Activated CD4-positive, alpha-beta T cell treated with anti-CD3 and anti-CD28 coated beads for 36 hours (primary cell): ENCODE measurements at regions of chr15 and their contacts with region 1.

Region 1: GRCh38 chr15:34101366-34102175 is at the starts of genes EMC7 and PGBD4:
- DNase-seq: peak; percentile 99
- ATAC-seq: peak; percentile 99
- H3K4me3 Mint-ChIP-seq: peak within 1 kb of the TSS; percentile 100
- H3K27ac Mint-ChIP-seq: peak within 1 kb of the TSS; percentile 99
- H3K4me1 Mint-ChIP-seq: peaks cover 40% of the 10 kb centered on the region
- H3K27me3 Mint-ChIP-seq: no peaks in the 10 kb centered on the region
- total RNA-seq, gene EMC7: 46.7 to 48.5 TPM
- total RNA-seq, gene PGBD4: 2.3 to 2.4 TPM

Region 2: GRCh38 chr15:34337557-34338306 is 236.2 kb after region 1 on chr15 and contains the start of gene SLC12A6:
- CTCF ChIA-PET with region 1: no interaction called
- POLR2A ChIA-PET with region 1: interaction called, 4 read pairs
- intact Hi-C with region 1: loop called (anchors 1 to 2 kb)
- DNase-seq: peak; percentile 95
- ATAC-seq: peak; percentile 82
- H3K4me3 Mint-ChIP-seq: peak within 1 kb of the TSS; percentile 83
- H3K27ac Mint-ChIP-seq: peak within 1 kb of the TSS; percentile 97
- H3K4me1 Mint-ChIP-seq: peaks cover 67% of the 10 kb centered on the region
- H3K27me3 Mint-ChIP-seq: no peaks in the 10 kb centered on the region
- total RNA-seq, gene SLC12A6: 18.2 to 22.1 TPM

Region 3: DNA sequence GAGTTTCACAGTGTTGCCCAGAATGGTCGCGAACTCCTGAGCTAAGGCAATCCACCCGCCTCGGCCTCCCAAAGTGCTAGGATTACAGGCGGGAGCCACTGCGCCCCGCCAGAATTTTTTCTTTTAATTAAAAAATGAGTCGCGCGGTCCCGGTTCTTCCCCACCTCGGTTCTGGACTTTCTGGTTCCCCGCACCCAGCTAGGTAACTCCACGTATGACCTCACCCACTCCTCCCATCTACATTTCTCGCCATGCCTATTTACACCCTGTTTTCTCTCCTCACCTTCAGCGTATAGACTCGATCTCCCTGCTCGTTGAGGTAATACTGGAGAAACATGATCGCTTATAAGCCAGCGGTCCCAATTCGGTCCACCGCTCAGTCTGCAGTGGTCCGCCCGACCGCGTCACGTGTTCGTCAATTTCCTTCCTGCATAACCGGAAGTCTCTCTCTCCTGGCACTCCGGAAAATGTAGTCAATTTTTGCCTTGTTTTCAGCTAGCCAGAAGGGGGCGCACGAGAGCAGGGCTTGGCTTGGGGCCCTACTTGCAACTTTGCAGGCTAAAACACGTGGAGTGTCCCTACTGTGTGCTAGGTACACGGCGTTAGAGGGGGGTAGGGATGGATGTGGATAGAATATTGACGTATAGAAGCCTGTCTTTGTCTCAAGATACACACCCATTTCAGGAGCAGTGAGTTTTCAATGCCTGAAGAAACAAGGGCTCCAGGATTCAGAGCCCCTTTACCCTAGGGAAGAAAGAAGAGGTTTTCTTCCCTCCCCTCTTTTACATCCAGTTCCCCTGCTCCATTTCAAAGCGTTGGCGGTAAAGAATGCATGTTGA is 241.4 kb after region 1 on chr15 and contains the starts of genes NOP10 and NUTM1:
- CTCF ChIA-PET with region 1: no interaction called
- POLR2A ChIA-PET with region 1: interaction called, 4 read pairs
- intact Hi-C with region 1: loop called (anchors 1 to 2 kb)
- DNase-seq: peak; percentile 97
- ATAC-seq: peak; percentile 91
- H3K4me3 Mint-ChIP-seq: no peak within 1 kb of the TSS
- H3K27ac Mint-ChIP-seq: peak within 1 kb of the TSS; percentile 88
- H3K4me1 Mint-ChIP-seq: peaks cover 30% of the 10 kb centered on the region
- H3K27me3 Mint-ChIP-seq: no peaks in the 10 kb centered on the region
- total RNA-seq, gene NOP10: 217 to 313 TPM
- total RNA-seq, gene NUTM1: not detected

Region 4: DNA sequence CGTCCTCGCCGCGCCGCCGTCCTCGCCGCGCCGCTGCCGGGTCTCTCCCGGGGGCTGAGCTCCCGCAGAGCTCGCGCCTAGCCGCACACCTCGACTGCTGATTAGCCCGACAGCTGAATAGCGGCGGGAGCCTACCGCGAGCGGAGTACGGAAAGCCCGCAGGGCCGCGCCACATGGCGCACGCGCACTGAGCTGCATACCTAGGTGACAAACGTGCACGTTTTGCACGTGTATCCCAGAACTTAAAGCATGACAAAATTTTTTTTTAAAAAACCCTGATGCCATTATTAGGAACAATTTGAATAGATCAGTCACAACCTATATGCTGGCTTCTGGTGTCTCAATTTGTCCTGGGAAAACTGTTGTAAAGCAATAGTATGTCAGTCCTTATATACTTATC is 336.1 kb after region 1 on chr15 and contains the start of gene GOLGA8A:
- CTCF ChIA-PET with region 1: no interaction called
- POLR2A ChIA-PET with region 1: no interaction called
- intact Hi-C with region 1: loop called in 1 of 2 experiments (anchors 2 kb)
- DNase-seq: peak; percentile 94
- ATAC-seq: peak; percentile 85
- H3K4me3 Mint-ChIP-seq: peak within 1 kb of the TSS; percentile 86
- H3K27ac Mint-ChIP-seq: peak within 1 kb of the TSS; percentile 95
- H3K4me1 Mint-ChIP-seq: peaks cover 18% of the 10 kb centered on the region
- H3K27me3 Mint-ChIP-seq: peaks cover under 1% of the 10 kb centered on the region
- total RNA-seq, gene GOLGA8A: 147 to 165 TPM

Region 5: DNA sequence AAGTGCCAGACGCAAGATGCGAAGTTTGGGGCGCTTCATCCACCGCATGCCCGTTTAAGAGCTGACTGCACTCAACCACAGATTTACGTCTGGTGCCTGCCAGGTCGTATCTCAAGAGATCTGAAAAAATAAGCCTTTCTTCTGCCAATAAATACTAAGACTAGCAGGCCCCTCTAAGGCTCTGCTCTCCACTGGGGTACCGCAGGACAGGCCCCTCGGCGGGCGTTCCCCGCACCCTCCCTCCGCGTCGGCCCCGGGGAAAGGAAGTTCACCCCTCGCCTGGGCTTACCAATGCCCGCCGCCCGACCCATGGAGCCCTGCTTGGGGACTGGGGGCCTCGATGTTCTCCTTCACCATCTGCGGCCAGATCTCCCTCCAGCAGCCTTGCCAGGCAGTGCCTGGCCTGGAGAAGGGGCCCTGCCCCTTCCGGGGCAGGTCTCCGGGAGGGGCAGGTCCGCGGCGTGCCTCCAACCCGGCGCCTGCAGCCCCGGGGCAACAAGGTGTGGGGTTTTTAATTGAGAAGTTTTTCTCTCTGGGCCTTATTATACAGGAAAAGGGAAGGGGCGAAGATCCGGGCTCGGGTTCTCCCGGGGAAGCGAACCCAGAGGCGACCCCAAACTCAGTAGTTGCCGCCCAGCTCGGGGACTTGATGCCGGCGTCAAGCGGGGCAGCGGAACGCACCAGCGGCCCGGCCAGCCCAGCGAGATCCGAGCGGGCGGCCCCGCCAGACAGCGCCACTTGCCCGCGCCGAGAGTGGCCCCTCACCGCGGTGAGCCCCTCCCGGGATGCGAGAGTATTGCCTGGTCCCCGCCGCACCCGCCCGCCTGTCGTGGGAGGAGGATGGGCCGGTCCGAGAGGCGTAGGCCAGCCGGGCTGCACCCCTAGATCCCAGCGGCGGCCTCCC is 481.1 kb after region 1 on chr15:
- CTCF ChIA-PET with region 1: no interaction called
- POLR2A ChIA-PET with region 1: interaction called, 3 read pairs
- intact Hi-C with region 1: loop called in 1 of 2 experiments (anchors 1 kb)
- DNase-seq: peak; percentile 68
- ATAC-seq: peak; percentile 56
- H3K4me3 Mint-ChIP-seq: peak overlapping the region; percentile 89
- H3K27ac Mint-ChIP-seq: peak overlapping the region; percentile 69
- H3K4me1 Mint-ChIP-seq: peaks cover 41% of the 10 kb centered on the region
- H3K27me3 Mint-ChIP-seq: peaks cover 13% of the 10 kb centered on the region

Region 6: DNA sequence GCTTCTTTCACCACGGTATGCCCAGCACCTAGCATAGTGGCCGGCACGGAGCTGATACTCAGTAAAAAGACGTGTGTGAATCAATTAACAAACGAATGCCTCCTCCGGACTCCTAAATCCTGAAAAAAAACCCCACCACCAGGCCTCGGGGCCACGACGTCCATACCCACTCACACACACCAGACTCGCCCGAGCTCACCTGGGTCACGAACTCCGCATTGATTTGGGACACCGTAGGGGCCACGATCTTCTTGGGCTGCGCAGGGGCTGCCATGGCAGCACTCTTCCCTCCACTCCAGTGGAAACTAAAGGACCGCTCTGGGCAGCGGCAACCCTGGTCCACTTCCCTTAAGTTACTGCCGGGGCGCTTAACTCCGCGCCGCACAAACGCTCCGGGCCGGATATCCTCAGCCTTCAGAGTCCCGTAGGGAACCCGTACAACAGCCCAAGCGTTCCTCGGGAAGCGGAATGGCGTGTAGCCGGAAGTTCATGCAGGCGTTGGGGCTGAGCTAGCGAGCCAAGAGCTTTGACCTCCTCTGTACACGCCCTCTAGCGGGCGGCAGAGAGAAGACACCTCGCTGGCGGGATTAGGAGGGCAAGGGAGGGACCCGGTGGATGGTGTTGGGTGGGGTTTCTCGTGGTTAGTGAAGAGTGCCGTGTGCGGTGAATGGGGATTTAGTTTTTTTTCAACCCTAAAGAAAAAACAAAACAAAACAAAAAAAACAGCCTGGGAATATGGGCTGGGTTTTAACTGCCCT is 867.9 kb after region 1 on chr15 and contains the start of gene AQR:
- CTCF ChIA-PET with region 1: no interaction called
- POLR2A ChIA-PET with region 1: no interaction called
- intact Hi-C with region 1: loop called in 1 of 2 experiments (anchors 1 kb)
- DNase-seq: peak; percentile 95
- ATAC-seq: peak; percentile 99
- H3K4me3 Mint-ChIP-seq: peak within 1 kb of the TSS; percentile 98
- H3K27ac Mint-ChIP-seq: peak within 1 kb of the TSS; percentile 91
- H3K4me1 Mint-ChIP-seq: peaks cover 35% of the 10 kb centered on the region
- H3K27me3 Mint-ChIP-seq: no peaks in the 10 kb centered on the region
- total RNA-seq, gene AQR: 39.2 to 62.0 TPM

Region 7: DNA sequence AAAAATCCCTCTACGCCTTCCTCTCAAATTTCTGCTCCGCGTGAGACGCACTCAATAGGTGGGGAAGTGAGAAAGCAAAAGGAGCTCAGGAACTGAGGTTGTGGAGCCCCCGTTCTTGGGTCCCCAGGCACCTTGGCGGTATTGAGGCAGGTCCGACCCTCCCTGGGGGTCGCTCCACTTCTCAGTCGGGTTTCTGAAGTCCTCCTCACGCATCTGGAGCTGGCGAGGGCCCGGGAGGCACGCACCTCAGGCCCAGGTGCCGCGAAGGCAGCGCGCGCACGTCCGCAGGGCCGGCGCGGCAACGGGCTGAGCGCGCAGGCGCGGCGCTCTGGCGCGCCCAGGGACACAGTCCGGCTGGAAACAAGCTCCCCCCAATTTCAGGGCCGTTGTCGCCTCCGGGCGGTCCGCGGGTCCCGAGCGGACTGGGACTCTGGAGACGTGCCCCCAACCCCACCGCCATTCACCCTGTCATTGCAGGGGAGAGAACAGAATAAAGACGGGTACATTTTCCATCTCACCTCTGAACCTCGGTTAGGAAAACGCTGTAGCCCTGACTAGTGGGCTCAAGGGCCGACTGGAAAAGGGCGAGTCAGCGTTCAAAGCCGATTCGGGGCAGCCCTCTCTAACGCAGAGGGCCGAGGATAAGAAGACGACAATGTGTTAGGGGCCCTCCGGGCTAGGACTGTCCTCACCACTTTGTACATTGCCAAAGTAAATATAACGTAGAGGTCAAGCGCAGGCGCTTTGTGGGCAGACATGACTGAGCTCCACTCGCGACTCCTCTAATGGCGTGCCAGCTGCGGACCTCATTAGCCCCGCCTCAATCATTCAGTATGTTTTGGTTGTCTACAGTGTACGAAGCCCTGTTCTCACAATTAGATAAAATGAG is 886.7 kb after region 1 on chr15 and contains the start of gene ZNF770:
- CTCF ChIA-PET with region 1: no interaction called
- POLR2A ChIA-PET with region 1: no interaction called
- intact Hi-C with region 1: loop called in 1 of 2 experiments (anchors 5 kb)
- DNase-seq: peak; percentile 88
- ATAC-seq: peak; percentile 87
- H3K4me3 Mint-ChIP-seq: peak within 1 kb of the TSS; percentile 97
- H3K27ac Mint-ChIP-seq: peak within 1 kb of the TSS; percentile 98
- H3K4me1 Mint-ChIP-seq: peaks cover 35% of the 10 kb centered on the region
- H3K27me3 Mint-ChIP-seq: no peaks in the 10 kb centered on the region
- total RNA-seq, gene ZNF770: 64.1 to 65.1 TPM